Right ventricle myocardium inferior (tissue), 1 donor: ENCODE measurements at regions of chr1 and their contacts with region 1.

Region 1: DNA sequence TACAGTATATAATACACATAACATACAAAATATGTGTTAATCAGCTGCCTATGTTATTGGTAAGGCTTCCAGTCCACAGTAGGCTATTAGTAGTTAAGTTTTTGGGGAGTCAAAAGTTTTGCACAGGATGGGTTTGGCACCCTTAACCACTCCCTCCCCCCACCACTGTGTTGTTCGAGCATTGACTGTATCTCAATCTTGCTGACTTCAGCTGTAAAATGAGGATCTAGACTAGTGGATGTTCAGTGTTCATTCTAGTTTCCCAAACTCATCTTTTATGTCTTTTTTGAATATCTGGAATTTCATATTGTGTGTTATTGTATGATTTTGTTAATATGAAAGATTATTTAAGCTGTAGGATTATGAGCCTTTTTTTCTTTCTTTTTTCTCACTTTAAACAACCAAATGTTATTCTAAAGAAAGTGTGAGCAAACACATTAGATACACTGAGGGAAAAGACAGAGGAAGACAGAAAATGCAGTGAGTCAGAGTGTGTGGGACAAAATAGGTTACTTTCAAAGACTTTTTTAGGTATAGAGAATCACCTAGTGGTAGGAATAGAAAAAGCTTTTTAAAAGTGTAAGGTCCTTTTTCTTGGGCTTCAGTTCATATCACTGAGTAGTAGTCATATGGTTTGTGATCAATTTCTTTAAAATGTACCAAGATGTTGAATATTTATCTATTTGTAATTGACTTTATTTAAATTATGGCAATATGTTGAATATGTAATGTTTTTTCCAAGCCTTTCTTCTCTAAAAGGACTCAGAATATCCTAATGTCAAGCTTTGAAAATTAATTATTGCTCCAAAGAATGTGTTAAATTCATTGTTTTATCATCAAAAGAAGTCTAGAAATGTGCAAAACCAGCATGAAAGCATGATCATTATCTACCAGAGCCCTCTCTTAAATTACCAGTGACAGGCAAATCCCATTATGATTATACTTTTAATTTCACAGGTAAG is 17.9 kb upstream of the CENPF start:
- DNase-seq: no peak
- ATAC-seq: peak; percentile 67

Region 2: GRCh38 chr1:214215583-214215982 is 369.5 kb before region 1 on chr1:
- intact Hi-C with region 1: loop called (anchors 1 kb)
- DNase-seq: no peak
- ATAC-seq: no peak

Region 3: GRCh38 chr1:214261206-214262123 is 323.6 kb before region 1 on chr1:
- intact Hi-C with region 1: loop called (anchors 5 kb)
- DNase-seq: peak; percentile 90
- ATAC-seq: peak; percentile 98

Region 4: DNA sequence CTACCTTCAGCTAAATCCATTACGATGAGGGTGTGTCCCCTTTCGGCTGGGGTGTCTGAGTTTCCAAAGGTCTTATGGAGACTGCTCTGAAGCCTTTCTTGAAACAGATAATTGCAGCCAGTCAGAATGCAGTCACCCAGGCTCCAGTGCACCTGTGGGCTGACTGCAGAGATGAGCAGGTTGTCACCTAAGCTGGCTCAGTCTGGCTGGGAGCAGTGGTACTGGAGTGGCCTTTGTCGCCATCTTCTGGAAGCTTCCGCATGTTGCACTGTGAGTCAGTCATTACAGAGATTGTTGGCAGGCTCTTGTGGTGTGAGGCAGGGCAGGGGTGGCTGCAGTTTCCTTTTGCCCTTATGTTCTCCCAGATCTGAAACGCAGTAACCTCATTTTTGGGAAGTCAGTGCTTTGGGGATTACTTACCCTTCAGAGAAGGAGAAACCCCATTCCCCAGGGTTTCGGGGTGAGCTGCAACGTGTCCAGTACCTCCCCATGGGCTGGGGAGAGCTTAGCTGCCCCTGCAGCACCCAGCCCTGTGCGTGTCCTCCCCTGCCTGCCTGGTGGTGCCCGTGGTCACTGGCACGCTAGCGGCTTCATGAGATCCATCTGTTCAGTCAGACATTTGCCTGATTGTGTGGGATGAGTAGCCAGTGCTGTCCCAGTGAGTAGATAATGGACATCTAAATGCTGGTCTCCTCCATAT is 256.2 kb before region 1 on chr1:
- intact Hi-C with region 1: loop called (anchors 2 kb)
- DNase-seq: peak; percentile 73
- ATAC-seq: peak; percentile 90

Region 5: GRCh38 chr1:214386747-214387146 is 198.3 kb before region 1 on chr1:
- intact Hi-C with region 1: loop called (anchors 1 kb)
- DNase-seq: peak; percentile 21
- ATAC-seq: no peak

Region 6: DNA sequence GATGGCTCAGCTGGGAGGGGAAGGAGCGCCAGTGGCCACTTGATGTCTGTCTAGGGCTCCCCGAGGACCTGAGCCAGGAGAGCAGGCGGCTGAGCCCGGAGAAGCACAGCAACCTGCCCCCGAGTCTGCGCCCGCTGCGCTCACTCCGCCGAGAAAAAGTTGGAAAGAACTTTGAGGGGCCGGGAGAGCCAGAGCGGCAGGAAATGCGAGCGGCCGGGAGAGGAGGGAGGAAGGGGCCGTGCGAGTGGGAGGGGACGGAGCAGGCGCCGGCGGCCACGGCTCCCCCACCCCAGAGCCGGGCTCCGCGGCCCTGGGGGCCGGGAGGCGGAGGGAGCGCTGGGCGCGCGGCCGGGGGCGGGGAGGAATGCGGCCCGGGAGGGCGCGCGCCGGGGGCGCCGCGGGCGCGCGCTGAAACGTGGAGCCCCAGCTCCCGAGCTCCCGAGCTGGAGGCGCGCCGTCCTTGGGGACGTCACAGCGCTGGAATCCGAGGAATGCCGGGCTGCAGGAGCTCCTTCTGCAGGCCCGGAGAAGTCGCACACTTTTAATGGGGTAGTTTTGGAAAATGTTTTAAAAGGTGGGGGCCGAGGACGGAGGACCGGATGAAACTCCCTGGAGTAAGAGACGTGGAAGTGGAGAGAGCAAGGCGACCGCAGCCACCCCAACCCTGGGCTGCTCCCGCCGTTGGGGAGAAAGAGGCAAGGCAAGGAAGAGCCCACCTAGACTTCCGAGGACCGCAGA is 33.5 kb before region 1 on chr1 and contains the start of gene PTPN14:
- intact Hi-C with region 1: no loop called
- DNase-seq: peak; percentile 90
- ATAC-seq: peak; percentile 93
- total RNA-seq, gene PTPN14: 23.0 TPM